Activated T-helper 1 cell treated with anti-CD3 and anti-CD28 coated beads, Interleukin-12 subunit alpha, Interleukin-12 subunit beta, Interleukin-2, Interleukin-4 antibody, amounts not matched to agents 30 ng/mL and 10 ng/mL and 1 ng/mL, durations not matched to agents 14 hours and 24 hours and 36 hours (primary cell): ENCODE measurements at regions of chr22 and their contacts with region 1.

Region 1: DNA sequence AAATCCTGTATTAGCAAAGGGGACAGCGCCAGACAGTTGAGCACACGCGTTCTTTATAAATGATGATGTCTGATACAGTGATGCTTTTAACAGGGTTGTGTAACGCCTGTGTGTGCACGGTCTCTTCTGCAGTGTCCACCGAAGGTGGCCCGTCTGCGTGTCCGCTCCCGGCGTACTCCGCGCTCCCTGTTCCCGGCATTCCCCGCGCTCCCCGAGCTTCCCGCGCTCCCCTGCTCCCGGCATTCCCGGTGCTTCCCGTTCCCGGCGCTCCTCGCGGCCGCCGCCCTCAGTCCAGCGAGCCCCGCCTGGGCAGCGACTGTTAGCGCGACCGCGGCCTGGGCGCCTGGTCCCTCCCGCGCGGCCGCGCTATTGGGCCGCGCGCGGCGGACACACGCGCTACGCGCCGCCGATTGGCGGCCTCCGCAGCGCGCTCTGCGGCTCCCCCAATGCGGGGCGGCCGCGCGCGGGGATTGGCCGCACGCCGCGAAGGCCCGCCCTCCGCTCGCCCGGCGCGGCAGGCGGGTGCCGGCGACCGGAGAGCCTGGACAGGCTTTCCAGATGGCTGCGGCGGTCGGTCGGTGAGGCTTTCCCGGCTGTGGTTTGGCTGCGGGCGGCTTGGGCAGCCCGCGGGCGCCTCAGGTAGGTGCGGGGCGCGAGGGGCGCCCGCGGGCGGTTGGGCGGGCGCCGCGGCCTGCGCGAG is at the start of gene DGCR8:
- DNase-seq: peak; percentile 74
- H3K4me3 Mint-ChIP-seq: peak within 1 kb of the TSS; percentile 86
- H3K27ac Mint-ChIP-seq: peak within 1 kb of the TSS; percentile 82
- H3K4me1 Mint-ChIP-seq: peaks cover 40% of the 10 kb centered on the region
- H3K27me3 Mint-ChIP-seq: no peaks in the 10 kb centered on the region
- total RNA-seq, gene DGCR8: 79.3 and 81.0 TPM in 2 replicates

Region 2: DNA sequence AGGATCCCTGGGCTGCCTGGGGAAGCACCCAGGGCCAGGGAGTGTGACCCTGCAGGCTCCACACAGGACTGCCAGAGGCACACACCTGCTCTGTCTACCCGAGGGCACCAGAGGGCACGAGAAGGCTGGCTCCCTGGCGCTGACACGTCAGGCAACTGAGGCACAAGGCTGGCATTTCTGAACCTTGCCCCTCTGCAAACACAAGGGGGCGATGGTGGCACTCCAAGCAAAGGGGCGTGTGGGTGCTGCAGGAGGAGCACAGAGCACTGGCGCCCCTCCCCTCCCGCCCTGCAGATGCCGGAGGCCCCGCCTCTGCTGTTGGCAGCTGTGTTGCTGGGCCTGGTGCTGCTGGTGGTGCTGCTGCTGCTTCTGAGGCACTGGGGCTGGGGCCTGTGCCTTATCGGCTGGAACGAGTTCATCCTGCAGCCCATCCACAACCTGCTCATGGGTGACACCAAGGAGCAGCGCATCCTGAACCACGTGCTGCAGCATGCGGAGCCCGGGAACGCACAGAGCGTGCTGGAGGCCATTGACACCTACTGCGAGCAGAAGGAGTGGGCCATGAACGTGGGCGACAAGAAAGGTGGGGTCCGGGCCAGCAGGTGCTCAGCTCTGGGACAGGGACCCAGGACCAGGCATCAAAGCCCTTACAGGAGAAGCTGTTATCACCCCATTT is 117.5 kb before region 1 on chr22:
- intact Hi-C with region 1: no loop called
- DNase-seq: peak; percentile 35
- H3K4me3 Mint-ChIP-seq: no peak overlapping the region
- H3K27ac Mint-ChIP-seq: no peak overlapping the region
- H3K4me1 Mint-ChIP-seq: no peaks in the 10 kb centered on the region
- H3K27me3 Mint-ChIP-seq: no peaks in the 10 kb centered on the region

Region 3: GRCh38 chr22:20102203-20102780 is 22.4 kb after region 1 on chr22:
- intact Hi-C with region 1: loop called (anchors 1 kb)
- DNase-seq: no peak
- H3K4me3 Mint-ChIP-seq: peak overlapping the region; percentile 54
- H3K27ac Mint-ChIP-seq: peak overlapping the region; percentile 80
- H3K4me1 Mint-ChIP-seq: peaks cover 62% of the 10 kb centered on the region
- H3K27me3 Mint-ChIP-seq: no peaks in the 10 kb centered on the region

Region 4: GRCh38 chr22:20238536-20238900 is 158.6 kb after region 1 on chr22:
- intact Hi-C with region 1: no loop called
- DNase-seq: peak; percentile 45
- H3K4me3 Mint-ChIP-seq: no peak overlapping the region
- H3K27ac Mint-ChIP-seq: no peak overlapping the region
- H3K4me1 Mint-ChIP-seq: peaks cover 3% of the 10 kb centered on the region
- H3K27me3 Mint-ChIP-seq: no peaks in the 10 kb centered on the region

Region 5: DNA sequence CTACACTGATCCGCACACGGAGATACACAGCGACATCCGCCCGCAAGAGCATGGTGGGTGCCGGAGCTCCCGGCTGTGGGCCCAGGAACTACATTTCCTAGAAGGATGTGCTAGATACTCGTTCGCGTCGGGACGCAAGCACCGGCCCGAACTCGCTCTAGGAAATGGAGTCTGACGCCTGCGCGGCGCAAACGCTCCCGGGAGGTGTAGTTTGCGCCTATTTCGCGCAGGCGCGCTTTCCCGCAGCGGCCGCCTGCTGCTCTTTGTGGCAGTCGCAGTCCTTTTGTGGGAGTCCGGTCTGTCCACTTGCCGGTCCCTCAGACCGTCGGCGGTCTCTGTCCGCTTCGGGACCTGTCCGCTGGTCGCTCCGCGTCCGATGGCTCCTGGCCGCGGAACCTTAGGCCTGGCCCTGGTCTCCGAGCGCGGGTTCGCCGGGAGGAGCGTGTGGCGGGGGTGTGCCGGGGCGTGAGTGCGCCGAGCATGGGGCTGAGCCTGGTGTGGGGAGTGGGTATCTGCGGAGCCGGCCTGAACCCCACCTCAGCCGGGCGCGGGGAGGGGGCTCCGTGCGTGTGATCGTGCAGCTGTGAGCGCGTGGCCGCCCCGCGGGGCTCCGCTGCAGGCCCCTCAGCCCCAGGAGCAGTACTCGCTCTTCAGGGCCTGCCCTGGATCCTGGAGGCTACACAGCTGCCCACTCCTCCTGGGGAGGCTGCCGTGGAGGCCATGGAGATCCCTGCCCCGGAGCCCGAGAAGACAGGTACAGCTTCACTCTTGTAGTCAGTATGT is 314.2 kb after region 1 on chr22 and contains the start of gene ZNF74:
- intact Hi-C with region 1: no loop called
- DNase-seq: peak; percentile 79
- H3K4me3 Mint-ChIP-seq: peak within 1 kb of the TSS; percentile 89
- H3K27ac Mint-ChIP-seq: peak within 1 kb of the TSS; percentile 91
- H3K4me1 Mint-ChIP-seq: peaks cover 22% of the 10 kb centered on the region
- H3K27me3 Mint-ChIP-seq: no peaks in the 10 kb centered on the region
- total RNA-seq, gene ZNF74: 14.3 and 15.2 TPM in 2 replicates